WTC11 (cell line): ENCODE measurements at regions of chr11 and their contacts with region 1.

Region 1: DNA sequence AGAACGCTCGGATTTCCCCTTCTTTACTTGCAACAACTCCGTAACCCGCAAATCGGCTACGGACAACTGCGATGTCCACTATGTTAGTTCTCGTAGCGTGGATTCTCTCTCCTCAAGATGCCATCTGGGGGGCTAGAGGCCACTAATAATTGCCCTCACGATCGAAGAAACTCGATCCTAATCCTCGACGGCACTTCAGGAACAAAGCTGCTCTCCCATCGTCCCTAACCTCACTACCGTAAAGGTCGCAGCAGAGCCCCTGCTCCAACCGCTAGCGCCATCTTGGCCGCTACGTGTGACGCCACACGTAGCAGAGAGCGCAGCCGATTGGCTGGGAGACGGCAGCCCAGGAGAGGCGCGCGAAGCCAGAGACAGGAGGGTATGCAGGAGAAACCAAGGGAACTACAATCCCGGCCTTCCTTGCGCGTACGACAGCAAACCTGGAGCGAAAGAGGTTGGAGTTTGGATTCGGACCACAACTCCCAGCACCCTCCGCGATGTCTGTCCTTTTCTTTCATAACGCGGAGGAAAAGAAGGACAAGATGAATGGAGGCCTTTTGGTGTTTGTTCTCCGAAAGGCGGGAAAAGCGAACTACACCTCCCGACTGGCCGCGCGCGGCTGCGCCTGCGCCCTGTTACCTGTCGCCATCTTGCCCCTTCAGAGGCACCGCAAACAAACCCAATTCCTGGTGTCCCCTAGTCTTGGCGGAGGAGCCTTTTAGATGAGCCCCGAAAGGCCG is at the start of gene EMSY:
- DNase-seq: peak; percentile 94
- ATAC-seq: peak; percentile 90
- H3K4me3 Mint-ChIP-seq: peak within 1 kb of the TSS; percentile 92
- H3K27ac Mint-ChIP-seq: peak within 1 kb of the TSS; percentile 100
- H3K4me1 Mint-ChIP-seq: peaks cover 43% of the 10 kb centered on the region
- H3K27me3 Mint-ChIP-seq: no peaks in the 10 kb centered on the region
- CTCF ChIP-seq: no peak
- total RNA-seq, gene EMSY: 25.3 to 31.1 TPM (median 29.2 TPM) in 3 replicates

Region 2: DNA sequence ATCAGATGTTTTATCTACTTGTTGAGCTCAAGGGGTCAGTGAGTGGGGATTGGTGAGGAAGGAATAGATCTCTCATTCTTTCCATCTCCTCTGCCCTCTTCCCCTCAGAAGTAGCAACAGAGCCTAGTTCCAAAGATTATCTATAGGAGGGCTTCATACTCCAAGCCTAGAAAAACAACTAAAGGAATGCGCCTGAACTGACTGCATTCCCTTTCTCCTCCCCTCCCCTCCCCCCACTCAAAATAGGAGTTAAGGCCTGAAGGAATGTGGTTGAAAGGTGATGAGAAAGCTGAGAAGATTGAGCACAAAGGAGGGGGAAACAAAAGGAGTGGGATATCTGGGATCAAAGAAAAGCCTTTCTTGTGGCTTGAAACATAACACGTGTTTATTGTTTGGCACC is 10.8 kb after region 1 on chr11:
- CTCF ChIA-PET with region 1: interaction called, 20 read pairs
- POLR2A ChIA-PET with region 1: interaction called, 8 read pairs
- DNase-seq: peak; percentile 52
- ATAC-seq: peak; percentile 98
- H3K4me3 Mint-ChIP-seq: peak overlapping the region; percentile 53
- H3K27ac Mint-ChIP-seq: peak overlapping the region; percentile 99
- H3K4me1 Mint-ChIP-seq: peaks cover 83% of the 10 kb centered on the region
- H3K27me3 Mint-ChIP-seq: no peaks in the 10 kb centered on the region
- CTCF ChIP-seq: no peak

Region 3: DNA sequence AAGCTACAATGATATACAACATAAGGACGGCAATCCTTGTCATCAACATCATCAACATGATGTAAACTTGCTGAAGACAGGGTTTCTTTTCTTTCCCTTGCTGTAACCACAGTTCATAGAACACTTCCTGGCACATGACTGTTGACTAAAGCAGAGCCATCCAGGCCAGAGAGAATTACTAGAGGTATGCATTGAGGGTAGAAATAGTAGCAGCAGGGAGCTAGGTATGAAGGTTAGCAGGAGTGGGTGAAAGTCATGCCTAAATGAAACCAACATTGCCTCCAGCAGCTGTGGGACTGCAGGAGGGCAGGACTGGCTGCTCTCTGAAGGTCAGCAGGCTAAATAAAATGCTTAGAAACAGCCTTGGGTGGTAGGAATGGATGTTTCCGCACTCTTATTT is 122.3 kb after region 1 on chr11:
- CTCF ChIA-PET with region 1: no interaction called
- POLR2A ChIA-PET with region 1: no interaction called
- DNase-seq: no peak
- ATAC-seq: no peak
- H3K4me3 Mint-ChIP-seq: no peak overlapping the region
- H3K27ac Mint-ChIP-seq: no peak overlapping the region
- H3K4me1 Mint-ChIP-seq: no peaks in the 10 kb centered on the region
- H3K27me3 Mint-ChIP-seq: no peaks in the 10 kb centered on the region
- CTCF ChIP-seq: no peak